ENCODE measurements at regions of chr11 and their contacts with region 1.

Region 1: GRCh38 chr11:114813189-114813718 is 134.9 kb downstream of the NXPE2 start:
- DNase-seq: no peak

Region 2: GRCh38 chr11:114796954-114797721 is 16.1 kb before region 1 on chr11:
- intact Hi-C with region 1: loop called in 1 of 2 experiments (anchors 1 kb)
- DNase-seq: no peak

Region 3: GRCh38 chr11:114909866-114910265 is 96.6 kb after region 1 on chr11:
- intact Hi-C with region 1: no loop called
- DNase-seq: no peak